RWPE1 (cell line): ENCODE measurements at regions of chr5 and their contacts with region 1.

Region 1: DNA sequence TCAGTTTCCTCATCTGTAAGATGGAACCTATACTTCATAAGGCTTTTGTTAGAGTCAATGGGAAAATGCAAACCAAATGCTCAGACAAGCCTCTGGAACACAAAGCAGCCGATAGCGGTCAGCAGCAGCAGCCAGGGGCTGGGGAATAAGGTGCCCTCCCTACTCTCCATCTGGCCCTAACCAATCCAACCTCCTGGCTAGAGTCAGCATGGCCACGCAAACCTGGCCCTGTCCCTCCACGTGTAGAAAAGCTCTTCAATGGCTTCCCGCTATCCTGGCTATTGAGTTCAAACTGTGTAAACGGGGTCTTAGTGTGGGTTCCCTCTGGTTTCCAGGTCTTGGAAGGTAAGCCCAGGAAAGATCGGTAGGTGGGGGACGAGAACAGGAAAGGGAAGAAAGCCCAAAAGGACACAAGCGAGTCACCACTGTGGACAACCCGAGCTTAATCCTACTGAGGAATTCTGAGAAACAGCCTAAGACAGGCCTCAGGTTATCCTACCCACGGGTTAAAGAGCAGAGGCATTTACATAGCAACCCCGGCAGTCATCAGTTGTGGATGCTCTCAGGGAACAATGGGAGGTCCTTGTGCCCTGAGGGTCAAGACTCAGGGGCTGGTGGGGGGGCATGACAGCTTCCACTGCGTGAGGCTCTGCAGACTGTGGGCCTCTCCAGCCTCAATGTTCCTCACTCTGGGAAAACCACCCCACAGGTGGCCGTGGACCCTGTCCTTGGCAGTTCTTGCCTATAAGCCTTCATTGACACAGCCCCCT is 30.9 kb downstream of the FABP6 start:
- DNase-seq: no peak
- H3K27ac ChIP-seq: no peak overlapping the region
- CTCF ChIP-seq: no peak

Region 2: DNA sequence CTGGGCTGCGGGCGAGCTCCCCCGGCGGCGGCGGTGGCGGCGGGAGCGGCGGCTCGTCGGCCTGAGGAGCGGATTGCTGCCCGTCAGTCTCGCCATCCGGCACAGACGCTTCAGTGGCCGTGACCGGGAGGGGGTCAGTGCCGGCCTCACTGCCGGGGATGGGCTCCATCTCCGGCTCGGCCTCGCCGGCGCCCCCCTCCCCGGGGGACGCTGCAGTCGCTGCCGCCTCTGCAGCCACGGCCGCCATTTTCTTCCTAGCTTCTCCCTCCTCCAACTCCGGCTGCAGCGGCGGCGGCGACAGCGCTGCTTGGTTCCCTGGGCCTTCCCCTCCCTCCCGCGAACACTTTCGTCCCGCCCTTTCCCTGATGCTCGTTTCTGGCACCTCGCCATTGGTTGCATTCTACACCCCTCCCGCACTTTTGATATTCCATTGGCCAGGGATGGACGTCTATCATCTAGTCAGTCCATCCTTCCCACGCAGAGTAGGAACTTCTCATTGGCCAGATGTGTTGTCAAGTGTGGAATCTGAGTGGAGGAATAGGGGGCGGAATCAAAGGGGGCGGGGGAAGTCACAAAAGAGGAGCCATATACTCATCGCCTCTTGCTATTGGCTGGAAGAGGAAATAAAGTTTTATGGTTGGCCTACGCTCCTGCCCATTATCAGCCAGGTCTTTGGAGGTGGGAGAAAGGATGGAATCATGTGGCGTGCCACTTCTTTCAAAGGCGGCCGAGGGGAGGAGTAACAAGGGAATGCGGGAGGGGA is 140.9 kb before region 1 on chr5 and contains the start of gene PWWP2A:
- CTCF ChIA-PET with region 1: no interaction called
- POLR2A ChIA-PET with region 1: no interaction called
- DNase-seq: peak; percentile 100
- H3K27ac ChIP-seq: peak within 1 kb of the TSS; percentile 89
- CTCF ChIP-seq: peak; percentile 22; the same call in 1 of the 2 replicates

Region 3: DNA sequence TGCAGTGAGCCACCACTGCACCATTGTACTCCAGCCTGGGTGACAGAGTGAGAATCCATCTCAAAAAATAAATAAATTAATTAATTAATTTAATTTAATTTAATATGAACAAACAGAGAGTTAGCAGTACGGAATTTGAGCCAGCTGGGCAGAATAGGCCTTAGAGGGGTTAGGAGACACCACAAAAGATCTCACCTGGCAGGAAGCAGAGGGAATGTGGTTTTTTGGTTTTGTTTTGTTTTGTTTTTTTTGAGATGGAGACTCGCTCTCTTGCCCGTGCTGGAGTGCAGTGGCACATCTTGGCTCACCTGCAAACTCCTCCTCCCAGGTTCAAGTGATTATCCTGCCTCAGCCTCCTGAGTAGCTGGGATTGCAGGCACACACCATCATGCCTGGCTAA is 109.2 kb before region 1 on chr5:
- CTCF ChIA-PET with region 1: interaction called, 10 read pairs
- POLR2A ChIA-PET with region 1: no interaction called
- DNase-seq: no peak
- H3K27ac ChIP-seq: no peak overlapping the region
- CTCF ChIP-seq: no peak

Region 4: DNA sequence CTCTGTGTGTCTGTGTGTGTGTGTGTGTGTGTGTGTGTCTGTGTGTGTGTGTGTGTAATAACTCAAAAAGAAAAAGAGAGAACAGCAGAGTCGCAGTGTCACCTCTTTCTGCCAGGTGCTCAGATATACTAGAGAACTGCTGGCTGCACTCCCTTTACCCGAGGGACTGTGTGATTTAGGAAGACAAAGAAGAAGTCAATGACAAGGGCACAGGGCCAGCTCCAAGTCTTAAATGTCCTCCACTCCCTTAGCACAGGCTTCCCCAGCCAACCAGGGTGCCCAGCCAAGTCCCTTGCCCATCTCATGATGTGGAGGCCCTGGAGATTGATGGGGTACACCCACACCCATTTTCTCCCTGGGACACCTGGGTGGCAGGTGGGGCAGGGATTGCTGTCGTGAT is 43.5 kb after region 1 on chr5:
- CTCF ChIA-PET with region 1: no interaction called
- POLR2A ChIA-PET with region 1: no interaction called
- DNase-seq: no peak
- H3K27ac ChIP-seq: no peak overlapping the region
- CTCF ChIP-seq: no peak